ENCODE measurements at regions of chr21 and their contacts with region 1.

Region 1: GRCh38 chr21:44510508-44511210 is 29.3 kb downstream of the KRTAP10-1 start:
- DNase-seq: peak; percentile 83
- H3K4me3 ChIP-seq: peak overlapping the region in 1 of 2 experiments; percentile 41; a peak in 1 of 4 replicates
- H3K27ac ChIP-seq: no peak overlapping the region
- H3K4me1 ChIP-seq: no peaks in the 10 kb centered on the region; a peak in 1 of 4 replicates
- H3K27me3 ChIP-seq: 0 out of 2 replicates have a peak, but pooled peaks cover 9% of the 10 kb centered on the region
- CTCF ChIP-seq: peak; percentile 85
- EP300 ChIP-seq: no peak
- RAD21 ChIP-seq: peak; percentile 60

Region 2: GRCh38 chr21:44496564-44497550 is 13.8 kb before region 1 on chr21:
- CTCF ChIA-PET with region 1: interaction called, 21 read pairs
- POLR2A ChIA-PET with region 1: no interaction called
- DNase-seq: no peak
- H3K4me3 ChIP-seq: no peak overlapping the region
- H3K27ac ChIP-seq: no peak overlapping the region
- H3K4me1 ChIP-seq: no peaks in the 10 kb centered on the region
- H3K27me3 ChIP-seq: peaks cover 18% of the 10 kb centered on the region
- CTCF ChIP-seq: no peak
- EP300 ChIP-seq: no peak
- RAD21 ChIP-seq: no peak